B cell (primary cell): ENCODE measurements at regions of chr4 and their contacts with region 1.

Region 1: GRCh38 chr4:52712172-52712990 is 38.8 kb downstream of the ERVMER34-1 start:
- DNase-seq: peak; percentile 95
- ATAC-seq: peak; percentile 94
- H3K4me3 ChIP-seq: peak overlapping the region; percentile 55 to 84 (median 70)
- H3K4me3 Mint-ChIP-seq: peak overlapping the region; percentile 94
- H3K27ac ChIP-seq: peak overlapping the region; percentile 59 to 85
- H3K27ac Mint-ChIP-seq: peak overlapping the region; percentile 95
- H3K4me1 ChIP-seq: peaks cover 40 to 53% of the 10 kb centered on the region in 2 donors
- H3K4me1 Mint-ChIP-seq: peaks cover 62% of the 10 kb centered on the region
- H3K27me3 ChIP-seq: no peaks in the 10 kb centered on the region
- H3K27me3 Mint-ChIP-seq: no peaks in the 10 kb centered on the region
- CTCF ChIP-seq: no peak

Region 2: DNA sequence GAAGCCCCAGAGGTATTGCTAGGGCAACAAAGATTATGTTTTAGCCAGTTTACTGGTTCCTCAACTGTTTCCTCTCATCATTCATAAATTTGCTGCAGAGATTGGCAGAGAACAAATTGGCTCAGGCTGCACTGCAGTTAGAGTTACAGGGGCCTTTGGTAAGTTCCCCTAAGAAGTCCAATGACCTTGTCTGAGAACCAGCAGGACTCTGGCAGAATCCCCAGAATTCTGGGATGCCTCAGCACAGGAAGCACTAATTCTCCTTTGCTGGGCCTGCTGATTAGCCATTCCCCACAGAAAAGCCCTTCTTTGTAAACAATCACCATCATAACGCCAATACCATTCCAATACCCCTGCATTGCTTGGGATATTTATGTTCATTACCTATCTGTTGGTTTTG is 204.6 kb before region 1 on chr4:
- CTCF ChIA-PET with region 1: no interaction called
- POLR2A ChIA-PET with region 1: no interaction called
- intact Hi-C with region 1: no loop called
- DNase-seq: no peak
- ATAC-seq: no peak
- H3K4me3 ChIP-seq: no peak overlapping the region
- H3K4me3 Mint-ChIP-seq: no peak overlapping the region
- H3K27ac ChIP-seq: no peak overlapping the region
- H3K27ac Mint-ChIP-seq: no peak overlapping the region
- H3K4me1 ChIP-seq: no peaks in the 10 kb centered on the region
- H3K4me1 Mint-ChIP-seq: no peaks in the 10 kb centered on the region
- H3K27me3 ChIP-seq: no peaks in the 10 kb centered on the region
- H3K27me3 Mint-ChIP-seq: peaks cover 14% of the 10 kb centered on the region
- CTCF ChIP-seq: no peak

Region 3: GRCh38 chr4:52659001-52659721 is 53.2 kb before region 1 on chr4 and contains the start of gene USP46:
- CTCF ChIA-PET with region 1: interaction called, 3 read pairs
- POLR2A ChIA-PET with region 1: interaction called, 27 read pairs
- intact Hi-C with region 1: loop called (anchors 1 kb)
- DNase-seq: peak; percentile 70
- ATAC-seq: peak; percentile 90
- H3K4me3 ChIP-seq: peak within 1 kb of the TSS; percentile 52 to 86 (median 77)
- H3K4me3 Mint-ChIP-seq: peak within 1 kb of the TSS; percentile 92
- H3K27ac ChIP-seq: peak within 1 kb of the TSS in 1 of 2 donors; percentile 57
- H3K27ac Mint-ChIP-seq: peak within 1 kb of the TSS; percentile 91
- H3K4me1 ChIP-seq: peaks cover 10 to 14% of the 10 kb centered on the region in 2 donors
- H3K4me1 Mint-ChIP-seq: peaks cover 25% of the 10 kb centered on the region
- H3K27me3 ChIP-seq: no peaks in the 10 kb centered on the region
- H3K27me3 Mint-ChIP-seq: no peaks in the 10 kb centered on the region
- CTCF ChIP-seq: no peak
- total RNA-seq, gene USP46: 10.0 and 11.8 TPM in 2 replicates

Region 4: GRCh38 chr4:52861879-52862616 is 149.7 kb after region 1 on chr4 and contains the start of gene RASL11B:
- CTCF ChIA-PET with region 1: no interaction called
- POLR2A ChIA-PET with region 1: interaction called, 3 read pairs
- intact Hi-C with region 1: loop called (anchors 1 kb)
- DNase-seq: peak; percentile 92
- ATAC-seq: peak; percentile 99
- H3K4me3 ChIP-seq: peak within 1 kb of the TSS; percentile 48 to 71 (median 58)
- H3K4me3 Mint-ChIP-seq: peak within 1 kb of the TSS; percentile 89
- H3K27ac ChIP-seq: no peak within 1 kb of the TSS
- H3K27ac Mint-ChIP-seq: no peak within 1 kb of the TSS
- H3K4me1 ChIP-seq: peaks cover 11 to 14% of the 10 kb centered on the region in 2 donors
- H3K4me1 Mint-ChIP-seq: peaks cover 14% of the 10 kb centered on the region
- H3K27me3 ChIP-seq: peaks cover 0 to 37% (median 15%) of the 10 kb centered on the region in 4 experiments
- H3K27me3 Mint-ChIP-seq: peaks cover 40% of the 10 kb centered on the region
- CTCF ChIP-seq: peak; percentile 44
- total RNA-seq, gene RASL11B: 1.2 and 1.3 TPM in 2 replicates

Region 5: DNA sequence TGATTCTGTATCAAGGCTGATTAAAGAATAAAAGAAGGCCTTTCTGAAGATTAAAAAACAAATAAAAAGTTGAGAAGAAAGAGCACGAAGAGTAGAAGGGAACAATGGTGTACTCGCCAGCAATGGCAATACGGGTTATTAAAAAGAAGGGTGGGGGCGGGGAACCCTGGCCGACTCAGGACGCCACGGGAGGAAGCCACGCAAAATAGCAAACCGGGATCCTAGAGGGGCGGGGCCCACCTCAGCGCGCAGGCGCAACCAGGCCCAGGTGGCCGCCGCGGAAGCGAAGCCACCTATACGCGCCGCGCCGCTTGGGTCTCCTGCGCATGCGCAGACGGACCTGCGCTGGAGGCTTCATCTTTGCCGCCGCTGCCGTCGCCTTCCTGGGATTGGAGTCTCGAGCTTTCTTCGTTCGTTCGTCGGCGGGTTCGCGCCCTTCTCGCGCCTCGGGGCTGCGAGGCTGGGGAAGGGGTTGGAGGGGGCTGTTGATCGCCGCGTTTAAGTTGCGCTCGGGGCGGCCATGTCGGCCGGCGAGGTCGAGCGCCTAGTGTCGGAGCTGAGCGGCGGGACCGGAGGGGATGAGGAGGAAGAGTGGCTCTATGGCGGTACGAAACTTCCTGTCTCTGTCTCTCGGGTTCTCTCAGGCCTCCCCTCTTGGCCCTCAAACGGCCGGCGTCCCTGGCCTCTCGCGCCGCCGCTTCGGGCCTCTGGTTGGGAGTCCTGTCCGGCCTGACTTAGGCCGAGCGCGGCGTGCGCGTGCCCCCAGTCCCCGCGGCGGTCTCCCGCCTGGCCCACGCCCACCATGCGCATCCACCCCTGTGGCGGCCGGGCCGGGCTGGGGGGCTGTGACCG is 665.2 kb after region 1 on chr4 and contains the start of gene FIP1L1:
- CTCF ChIA-PET with region 1: no interaction called
- POLR2A ChIA-PET with region 1: no interaction called
- intact Hi-C with region 1: loop called (anchors 2 kb)
- DNase-seq: peak; percentile 97
- ATAC-seq: peak; percentile 92
- H3K4me3 ChIP-seq: peak within 1 kb of the TSS; percentile 74 to 95 (median 85)
- H3K4me3 Mint-ChIP-seq: peak within 1 kb of the TSS; percentile 100
- H3K27ac ChIP-seq: peak within 1 kb of the TSS; percentile 79 to 88
- H3K27ac Mint-ChIP-seq: peak within 1 kb of the TSS; percentile 99
- H3K4me1 ChIP-seq: peaks cover 7 to 28% of the 10 kb centered on the region in 2 donors
- H3K4me1 Mint-ChIP-seq: peaks cover 33% of the 10 kb centered on the region
- H3K27me3 ChIP-seq: peaks cover 0 to 2% (median 0%) of the 10 kb centered on the region in 4 experiments
- H3K27me3 Mint-ChIP-seq: no peaks in the 10 kb centered on the region
- CTCF ChIP-seq: no peak
- total RNA-seq, gene FIP1L1: 79.3 and 84.8 TPM in 2 replicates

Region 6: DNA sequence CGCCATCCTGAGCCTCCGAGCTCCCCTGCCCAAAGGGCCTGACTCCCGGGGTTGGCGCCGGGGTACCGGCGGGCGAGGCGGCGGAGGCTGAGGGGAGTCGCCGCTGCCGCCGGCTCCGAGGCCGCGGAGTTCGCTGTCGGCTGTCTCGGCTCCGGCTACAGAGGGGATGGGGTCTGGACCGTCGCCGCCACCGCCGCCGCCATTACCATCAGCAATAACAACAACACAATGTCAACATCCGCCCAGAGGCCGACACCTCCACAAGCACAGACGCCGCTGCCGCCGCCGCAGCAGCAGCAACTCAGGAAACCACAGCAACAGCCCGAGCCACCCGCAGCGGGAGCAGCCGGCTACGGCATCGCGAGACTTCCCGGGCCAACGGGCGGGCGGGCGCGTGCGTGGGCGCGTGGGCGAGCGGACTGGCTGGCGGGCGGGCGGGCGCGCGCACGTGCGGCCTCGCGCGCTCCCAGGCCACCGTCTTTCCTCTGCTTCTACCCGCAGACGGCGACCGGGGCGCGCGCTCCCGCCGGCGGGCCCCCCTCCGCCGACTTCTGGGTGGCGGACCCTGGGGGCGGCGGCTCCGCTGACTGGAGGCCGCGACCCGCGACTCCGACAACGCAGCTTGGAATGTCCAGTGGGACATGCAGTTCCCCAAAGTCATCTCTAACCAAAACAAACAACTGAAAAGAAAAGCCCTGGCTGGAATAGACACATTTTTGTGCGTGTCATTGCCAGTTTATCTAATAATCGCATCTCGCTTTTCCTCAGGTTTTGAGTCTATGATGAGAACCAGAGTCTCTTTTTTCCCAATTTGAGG is 1352.1 kb after region 1 on chr4 and contains the start of gene CHIC2:
- CTCF ChIA-PET with region 1: no interaction called
- POLR2A ChIA-PET with region 1: no interaction called
- intact Hi-C with region 1: loop called (anchors 2 kb)
- DNase-seq: peak; percentile 98
- ATAC-seq: peak; percentile 89
- H3K4me3 ChIP-seq: peak within 1 kb of the TSS; percentile 77 to 99 (median 89)
- H3K4me3 Mint-ChIP-seq: peak within 1 kb of the TSS; percentile 95
- H3K27ac ChIP-seq: peak within 1 kb of the TSS; percentile 79 to 98
- H3K27ac Mint-ChIP-seq: peak within 1 kb of the TSS; percentile 95
- H3K4me1 ChIP-seq: peaks cover 17 to 33% of the 10 kb centered on the region in 2 donors
- H3K4me1 Mint-ChIP-seq: peaks cover 39% of the 10 kb centered on the region
- H3K27me3 ChIP-seq: no peaks in the 10 kb centered on the region
- H3K27me3 Mint-ChIP-seq: no peaks in the 10 kb centered on the region
- CTCF ChIP-seq: no peak
- total RNA-seq, gene CHIC2: 34.9 and 37.7 TPM in 2 replicates